Tibial artery (tissue), 4 donors: ENCODE measurements at regions of chr17 and their contacts with region 1.

Region 1: GRCh38 chr17:4420692-4421131 is 13.0 kb upstream of the SPNS3 start:
- DNase-seq: peak in 1 of 2 donors; percentile 46
- H3K4me3 ChIP-seq: no peak overlapping the region
- H3K27ac ChIP-seq: no peak overlapping the region
- H3K4me1 ChIP-seq: no peaks in the 10 kb centered on the region
- H3K27me3 ChIP-seq: no peaks in the 10 kb centered on the region
- CTCF ChIP-seq: peak; percentile 79 to 83

Region 2: GRCh38 chr17:4354862-4355514 is 65.7 kb before region 1 on chr17:
- intact Hi-C with region 1: no loop called
- DNase-seq: no peak
- H3K4me3 ChIP-seq: no peak overlapping the region
- H3K27ac ChIP-seq: no peak overlapping the region
- H3K4me1 ChIP-seq: peaks cover 0 to 81% (median 22%) of the 10 kb centered on the region in 4 donors
- H3K27me3 ChIP-seq: no peaks in the 10 kb centered on the region
- CTCF ChIP-seq: no peak

Region 3: DNA sequence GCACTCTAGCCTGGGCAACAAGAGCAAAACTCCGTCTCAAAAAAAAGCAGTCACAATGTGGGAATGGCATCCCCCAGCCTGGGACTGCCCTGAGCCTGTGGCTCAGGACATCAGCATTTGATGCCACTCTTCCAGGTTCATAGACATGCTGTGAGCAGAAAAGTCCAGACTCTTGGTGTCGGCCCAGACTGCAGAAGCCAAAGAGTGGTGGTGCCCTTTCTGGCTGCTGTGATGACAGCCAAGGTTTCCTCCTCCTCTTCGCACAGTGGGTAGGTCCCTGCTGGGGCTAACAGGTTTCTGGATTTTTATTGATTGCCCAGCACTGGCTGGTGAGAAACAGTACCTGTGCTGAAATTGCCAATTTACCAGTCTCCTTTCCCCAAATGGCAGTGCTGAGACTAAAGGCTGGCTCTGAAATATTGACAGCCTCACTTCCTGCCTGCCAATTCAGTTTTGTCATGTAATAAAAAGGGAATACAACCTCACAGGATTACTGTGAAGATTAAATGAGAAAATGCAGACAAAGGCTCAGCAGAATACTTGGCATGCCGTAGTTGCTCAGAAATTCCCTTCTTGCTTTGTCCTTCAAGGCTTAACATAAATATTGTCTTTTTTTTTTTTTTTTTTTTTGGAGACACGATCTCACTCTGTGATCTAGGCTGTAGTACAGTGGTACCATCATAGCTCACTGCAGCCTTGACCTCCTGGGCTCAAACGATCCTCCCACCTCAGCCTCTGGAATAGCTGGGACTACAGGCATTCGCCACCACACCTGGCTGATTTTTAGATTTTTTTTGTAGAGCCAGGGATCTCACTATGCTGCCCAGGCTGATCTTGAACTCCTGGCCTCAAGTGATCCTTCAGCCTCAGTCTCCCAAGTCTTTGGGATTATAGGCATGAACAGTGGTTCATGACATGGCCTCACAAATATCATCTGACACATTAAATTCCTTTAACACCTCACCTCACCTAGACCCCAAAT is 38.7 kb before region 1 on chr17:
- intact Hi-C with region 1: no loop called
- DNase-seq: no peak
- H3K4me3 ChIP-seq: no peak overlapping the region
- H3K27ac ChIP-seq: no peak overlapping the region
- H3K4me1 ChIP-seq: no peaks in the 10 kb centered on the region
- H3K27me3 ChIP-seq: peaks cover 0 to 2% of the 10 kb centered on the region in 2 donors
- CTCF ChIP-seq: no peak

Region 4: GRCh38 chr17:4540224-4540641 is 119.5 kb after region 1 on chr17:
- intact Hi-C with region 1: loop called (anchors 10 kb)
- DNase-seq: no peak
- H3K4me3 ChIP-seq: no peak overlapping the region
- H3K27ac ChIP-seq: no peak overlapping the region
- H3K4me1 ChIP-seq: peaks cover 10 to 52% (median 32%) of the 10 kb centered on the region in 4 donors
- H3K27me3 ChIP-seq: no peaks in the 10 kb centered on the region
- CTCF ChIP-seq: no peak

Region 5: GRCh38 chr17:4625181-4625617 is 204.5 kb after region 1 on chr17:
- intact Hi-C with region 1: loop called (anchors 5 kb)
- DNase-seq: no peak
- H3K4me3 ChIP-seq: no peak overlapping the region
- H3K27ac ChIP-seq: no peak overlapping the region
- H3K4me1 ChIP-seq: peaks cover 0 to 7% (median 4%) of the 10 kb centered on the region in 4 donors
- H3K27me3 ChIP-seq: peaks cover 0 to 2% of the 10 kb centered on the region in 2 donors
- CTCF ChIP-seq: no peak